Activated naive CD4-positive, alpha-beta T cell treated with anti-CD3 and anti-CD28 coated beads for 36 hours (primary cell): ENCODE measurements at regions of chr4 and their contacts with region 1.

Region 1: GRCh38 chr4:26288355-26288909 is 32.4 kb upstream of the RBPJ start:
- DNase-seq: peak; percentile 61
- H3K4me3 Mint-ChIP-seq: no peak overlapping the region
- H3K27ac Mint-ChIP-seq: no peak overlapping the region
- H3K4me1 Mint-ChIP-seq: peaks cover 14% of the 10 kb centered on the region
- H3K27me3 Mint-ChIP-seq: no peaks in the 10 kb centered on the region

Region 2: GRCh38 chr4:26307037-26307800 is 18.8 kb after region 1 on chr4:
- CTCF ChIA-PET with region 1: no interaction called
- intact Hi-C with region 1: loop called (anchors 2 kb)
- DNase-seq: no peak
- H3K4me3 Mint-ChIP-seq: no peak overlapping the region
- H3K27ac Mint-ChIP-seq: peak overlapping the region; percentile 47
- H3K4me1 Mint-ChIP-seq: peaks cover 11% of the 10 kb centered on the region
- H3K27me3 Mint-ChIP-seq: no peaks in the 10 kb centered on the region